ENCODE measurements at regions of chr16 and their contacts with region 1.

Region 1: GRCh38 chr16:29926005-29926710 is at the start of gene KCTD13:
- DNase-seq: peak; percentile 91
- H3K4me3 Mint-ChIP-seq: peak within 1 kb of the TSS; percentile 95
- H3K27ac Mint-ChIP-seq: peak within 1 kb of the TSS; percentile 94
- H3K4me1 Mint-ChIP-seq: peaks cover 32% of the 10 kb centered on the region
- H3K27me3 Mint-ChIP-seq: no peaks in the 10 kb centered on the region
- total RNA-seq, gene KCTD13: 39.7 and 47.5 TPM in 2 replicates

Region 2: DNA sequence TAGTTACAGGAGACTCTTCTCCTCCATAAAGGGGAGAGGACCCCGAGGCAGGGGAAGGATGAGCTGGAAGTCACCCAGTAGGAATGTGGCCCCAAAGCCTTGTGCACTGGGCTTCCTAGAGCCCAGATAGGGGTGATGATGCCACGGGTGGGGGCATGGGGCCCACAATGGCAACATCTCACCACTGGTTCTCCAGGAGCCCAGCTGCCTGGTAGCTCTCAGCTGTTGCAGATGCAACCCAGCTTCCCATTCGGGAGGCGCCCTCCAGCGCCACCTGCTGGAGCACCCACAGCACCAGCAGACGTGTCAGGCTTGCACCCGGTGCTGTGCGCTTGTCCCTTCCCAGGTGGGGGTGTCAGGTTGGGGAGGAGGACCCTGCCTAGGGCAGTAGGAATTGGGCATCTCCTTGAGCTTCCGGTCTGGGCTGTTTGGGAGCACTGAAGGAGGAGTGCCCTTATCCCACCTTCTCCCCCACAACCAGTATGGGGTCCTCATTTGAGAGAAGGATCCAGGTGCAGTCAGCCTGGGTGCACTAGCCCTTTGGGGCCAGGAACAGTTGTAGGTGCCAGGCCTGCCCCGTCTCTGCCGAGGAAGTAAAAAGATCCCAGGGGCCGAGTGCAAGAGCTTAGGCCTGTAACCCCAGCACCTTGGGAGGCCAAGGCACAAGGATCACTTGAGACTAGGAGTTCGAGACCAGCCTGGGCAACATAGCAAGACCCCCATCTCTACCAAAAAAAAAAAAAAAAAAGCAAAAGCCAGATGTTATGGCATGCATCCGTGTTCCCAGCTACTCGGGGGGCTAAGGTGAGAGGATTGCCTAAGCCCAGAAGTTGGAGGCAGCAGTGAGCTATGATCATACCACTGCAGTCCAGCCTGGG is 77.5 kb before region 1 on chr16:
- intact Hi-C with region 1: no loop called
- DNase-seq: peak; percentile 68
- H3K4me3 Mint-ChIP-seq: no peak overlapping the region
- H3K27ac Mint-ChIP-seq: no peak overlapping the region
- H3K4me1 Mint-ChIP-seq: peaks cover 5% of the 10 kb centered on the region
- H3K27me3 Mint-ChIP-seq: no peaks in the 10 kb centered on the region

Region 3: GRCh38 chr16:29883987-29884386 is 42.2 kb before region 1 on chr16:
- intact Hi-C with region 1: no loop called
- DNase-seq: no peak
- H3K4me3 Mint-ChIP-seq: no peak overlapping the region
- H3K27ac Mint-ChIP-seq: no peak overlapping the region
- H3K4me1 Mint-ChIP-seq: no peaks in the 10 kb centered on the region
- H3K27me3 Mint-ChIP-seq: peaks cover 4% of the 10 kb centered on the region

Region 4: GRCh38 chr16:29900102-29900887 is 25.9 kb before region 1 on chr16 and contains the start of gene ASPHD1:
- intact Hi-C with region 1: no loop called
- DNase-seq: peak; percentile 71
- H3K4me3 Mint-ChIP-seq: peak within 1 kb of the TSS; percentile 81
- H3K27ac Mint-ChIP-seq: peak within 1 kb of the TSS; percentile 49
- H3K4me1 Mint-ChIP-seq: peaks cover 11% of the 10 kb centered on the region
- H3K27me3 Mint-ChIP-seq: peaks cover 33% of the 10 kb centered on the region
- total RNA-seq, gene ASPHD1: 2.1 and 2.2 TPM in 2 replicates

Region 5: DNA sequence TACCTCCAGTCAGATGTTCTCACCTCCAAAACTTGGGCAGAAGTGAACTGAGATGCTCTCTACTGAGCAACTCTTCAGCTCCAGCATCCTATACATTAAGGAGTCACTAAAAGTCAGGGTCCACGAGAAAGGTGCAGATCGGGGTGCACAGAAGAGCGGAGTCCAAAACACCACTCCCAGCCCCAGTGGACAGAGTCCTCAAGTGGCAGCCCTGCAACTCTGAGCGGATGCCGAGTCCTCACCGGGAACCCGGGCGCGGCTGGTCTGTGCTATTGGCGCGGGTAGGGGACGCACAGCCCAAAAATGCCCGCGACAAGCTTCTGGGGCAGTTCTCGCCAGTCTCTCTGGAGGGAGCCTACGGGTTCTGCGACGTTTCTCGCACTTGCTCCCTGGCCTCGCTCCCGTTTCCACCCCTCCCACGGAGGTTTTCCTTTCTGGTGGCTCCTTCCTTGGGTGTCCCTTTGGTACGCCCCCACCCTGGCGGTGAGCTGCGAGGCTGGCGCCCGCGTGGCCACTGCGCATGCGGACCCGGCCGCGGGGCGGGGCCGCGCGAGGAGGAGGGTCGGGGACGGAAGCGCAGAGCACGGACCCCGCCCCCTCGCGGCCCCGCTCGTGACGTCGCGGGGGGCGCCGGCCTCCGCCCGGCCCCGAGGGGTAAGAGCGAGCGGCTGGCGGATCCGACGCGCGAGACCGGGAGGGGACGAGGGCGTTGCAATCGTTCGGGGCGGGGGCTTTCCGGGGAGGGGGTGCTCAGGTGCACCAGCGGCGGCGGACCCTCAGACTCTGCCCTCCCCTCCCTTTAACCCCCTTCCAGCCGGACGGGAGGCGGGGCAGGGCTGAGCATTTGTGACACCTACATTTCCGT is 35.6 kb after region 1 on chr16 and contains the start of gene TMEM219:
- intact Hi-C with region 1: loop called (anchors 5 kb)
- DNase-seq: peak; percentile 93
- H3K4me3 Mint-ChIP-seq: peak within 1 kb of the TSS; percentile 85
- H3K27ac Mint-ChIP-seq: peak within 1 kb of the TSS; percentile 69
- H3K4me1 Mint-ChIP-seq: peaks cover 20% of the 10 kb centered on the region
- H3K27me3 Mint-ChIP-seq: no peaks in the 10 kb centered on the region
- total RNA-seq, gene TMEM219: 52.1 and 59.0 TPM in 2 replicates

Measured in activated T-helper 2 cell treated with anti-CD3 and anti-CD28 coated beads, Interferon-gamma antibody, Interleukin-2, Interleukin-4, amounts not matched to agents 10 μg/mL and 5 μg/mL and 100 μg/mL, durations not matched to agents 14 hours and 24 hours and 36 hours (primary cell).